Naive thymus-derived CD4-positive, alpha-beta T cell (primary cell): ENCODE measurements at regions of chr5 and their contacts with region 1.

Region 1: GRCh38 chr5:134370871-134371833 is at the start of gene UBE2B:
- DNase-seq: peak; percentile 96 to 99 (median 98)
- ATAC-seq: peak; percentile 86
- H3K4me3 ChIP-seq: peak within 1 kb of the TSS; percentile 94
- H3K4me3 Mint-ChIP-seq: peak within 1 kb of the TSS; percentile 82 to 99 (median 96)
- H3K27ac ChIP-seq: peak within 1 kb of the TSS; percentile 100
- H3K27ac Mint-ChIP-seq: peak within 1 kb of the TSS; percentile 97 to 100 (median 100)
- H3K4me1 ChIP-seq: peaks cover 25 to 38% of the 10 kb centered on the region in 2 donors
- H3K4me1 Mint-ChIP-seq: peaks cover 30 to 76% (median 60%) of the 10 kb centered on the region in 7 donors
- H3K27me3 ChIP-seq: no peaks in the 10 kb centered on the region
- H3K27me3 Mint-ChIP-seq: peaks cover 0 to 8% (median 0%) of the 10 kb centered on the region in 5 donors
- total RNA-seq, gene UBE2B: 91.4 to 141 (median 124) TPM

Region 2: DNA sequence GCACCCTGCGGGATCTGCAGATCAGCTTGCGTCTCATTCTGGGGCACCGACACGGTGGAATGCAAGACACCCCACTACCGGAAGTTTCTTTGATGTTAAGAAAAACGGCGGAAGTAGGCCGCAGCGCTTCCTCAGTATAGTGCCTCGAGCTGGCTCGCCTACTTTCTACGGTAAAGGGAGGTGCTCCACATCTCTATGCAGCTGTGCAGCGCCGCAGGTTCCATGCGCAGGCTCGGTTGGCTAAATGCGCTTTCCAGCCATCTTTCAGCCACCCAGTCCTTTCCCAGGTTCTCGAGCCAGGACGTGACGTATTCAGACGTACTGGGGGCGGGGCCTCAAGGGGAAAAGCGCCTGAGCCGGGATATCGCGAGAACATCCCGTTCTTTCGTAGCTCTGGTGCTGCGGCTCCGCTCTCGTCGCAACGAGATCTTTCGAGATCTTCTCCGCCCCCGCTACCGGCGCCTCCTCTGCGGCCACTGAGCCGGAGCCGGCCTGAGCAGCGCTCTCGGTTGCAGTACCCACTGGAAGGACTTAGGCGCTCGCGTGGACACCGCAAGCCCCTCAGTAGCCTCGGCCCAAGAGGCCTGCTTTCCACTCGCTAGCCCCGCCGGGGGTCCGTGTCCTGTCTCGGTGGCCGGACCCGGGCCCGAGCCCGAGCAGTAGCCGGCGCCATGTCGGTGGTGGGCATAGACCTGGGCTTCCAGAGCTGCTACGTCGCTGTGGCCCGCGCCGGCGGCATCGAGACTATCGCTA is 1319.4 kb before region 1 on chr5 and contains the start of gene HSPA4:
- CTCF ChIA-PET with region 1: no interaction called
- POLR2A ChIA-PET with region 1: interaction called, 3 read pairs
- intact Hi-C with region 1: loop called in 1 of 2 experiments (anchors 2 kb)
- DNase-seq: peak; percentile 86 to 99 (median 98)
- ATAC-seq: peak; percentile 91
- H3K4me3 ChIP-seq: peak within 1 kb of the TSS; percentile 92
- H3K4me3 Mint-ChIP-seq: peak within 1 kb of the TSS; percentile 91 to 99 (median 98)
- H3K27ac ChIP-seq: peak within 1 kb of the TSS; percentile 98
- H3K27ac Mint-ChIP-seq: peak within 1 kb of the TSS; percentile 99 to 100 (median 100)
- H3K4me1 ChIP-seq: peaks cover 17 to 19% of the 10 kb centered on the region in 2 donors
- H3K4me1 Mint-ChIP-seq: peaks cover 31 to 70% (median 52%) of the 10 kb centered on the region in 7 donors
- H3K27me3 ChIP-seq: no peaks in the 10 kb centered on the region
- H3K27me3 Mint-ChIP-seq: no peaks in the 10 kb centered on the region
- total RNA-seq, gene HSPA4: 42.1 to 103 (median 50.0) TPM

Region 3: DNA sequence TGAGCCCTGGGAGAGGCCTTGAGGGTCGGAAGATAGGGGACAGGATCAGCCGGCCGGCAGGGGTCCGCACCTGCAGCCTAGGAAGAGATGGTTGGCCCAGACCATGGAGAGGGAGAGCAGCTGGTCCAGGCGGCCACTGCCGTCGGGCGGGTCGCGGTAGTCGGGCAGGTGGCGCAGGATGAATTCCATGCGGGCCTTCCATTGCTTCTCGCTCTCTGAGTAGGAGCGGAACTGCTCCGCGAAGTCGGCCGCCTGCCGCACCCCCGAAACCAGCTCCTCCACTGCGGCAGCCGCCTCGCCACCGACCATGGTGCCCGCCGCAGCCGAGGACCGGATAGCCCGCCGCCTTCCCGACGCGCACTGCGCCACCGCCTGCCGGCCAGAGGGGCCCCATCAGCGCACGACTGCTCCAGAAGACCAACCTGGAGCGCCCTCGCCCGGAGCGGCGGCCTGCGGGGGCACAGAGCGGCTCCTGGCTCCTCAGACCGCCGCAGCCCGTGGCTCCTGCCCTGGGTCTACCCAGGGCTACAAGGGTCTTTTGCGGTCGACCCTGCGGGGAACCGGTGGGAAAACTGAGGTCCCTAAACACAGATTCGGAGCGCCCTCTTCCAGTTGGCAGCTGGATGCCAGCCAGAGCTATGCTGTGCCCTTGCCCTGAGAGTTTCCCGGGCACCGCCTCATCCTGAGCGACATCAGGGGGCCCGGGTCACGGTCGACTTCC is 40.6 kb after region 1 on chr5 and contains the start of gene CDKN2AIPNL:
- CTCF ChIA-PET with region 1: interaction called, 4 read pairs
- POLR2A ChIA-PET with region 1: interaction called, 57 read pairs
- intact Hi-C with region 1: loop called (anchors 1 to 2 kb)
- DNase-seq: peak; percentile 83 to 93 (median 89)
- ATAC-seq: peak; percentile 100
- H3K4me3 ChIP-seq: peak within 1 kb of the TSS; percentile 82
- H3K4me3 Mint-ChIP-seq: peak within 1 kb of the TSS; percentile 86 to 96 (median 92)
- H3K27ac ChIP-seq: peak within 1 kb of the TSS; percentile 82
- H3K27ac Mint-ChIP-seq: peak within 1 kb of the TSS; percentile 63 to 93 (median 90)
- H3K4me1 ChIP-seq: peaks cover 16 to 23% of the 10 kb centered on the region in 2 donors
- H3K4me1 Mint-ChIP-seq: peaks cover 20 to 54% (median 38%) of the 10 kb centered on the region in 7 donors
- H3K27me3 ChIP-seq: no peaks in the 10 kb centered on the region
- H3K27me3 Mint-ChIP-seq: no peaks in the 10 kb centered on the region
- total RNA-seq, gene CDKN2AIPNL: 11.5 to 20.8 (median 16.8) TPM

Region 4: DNA sequence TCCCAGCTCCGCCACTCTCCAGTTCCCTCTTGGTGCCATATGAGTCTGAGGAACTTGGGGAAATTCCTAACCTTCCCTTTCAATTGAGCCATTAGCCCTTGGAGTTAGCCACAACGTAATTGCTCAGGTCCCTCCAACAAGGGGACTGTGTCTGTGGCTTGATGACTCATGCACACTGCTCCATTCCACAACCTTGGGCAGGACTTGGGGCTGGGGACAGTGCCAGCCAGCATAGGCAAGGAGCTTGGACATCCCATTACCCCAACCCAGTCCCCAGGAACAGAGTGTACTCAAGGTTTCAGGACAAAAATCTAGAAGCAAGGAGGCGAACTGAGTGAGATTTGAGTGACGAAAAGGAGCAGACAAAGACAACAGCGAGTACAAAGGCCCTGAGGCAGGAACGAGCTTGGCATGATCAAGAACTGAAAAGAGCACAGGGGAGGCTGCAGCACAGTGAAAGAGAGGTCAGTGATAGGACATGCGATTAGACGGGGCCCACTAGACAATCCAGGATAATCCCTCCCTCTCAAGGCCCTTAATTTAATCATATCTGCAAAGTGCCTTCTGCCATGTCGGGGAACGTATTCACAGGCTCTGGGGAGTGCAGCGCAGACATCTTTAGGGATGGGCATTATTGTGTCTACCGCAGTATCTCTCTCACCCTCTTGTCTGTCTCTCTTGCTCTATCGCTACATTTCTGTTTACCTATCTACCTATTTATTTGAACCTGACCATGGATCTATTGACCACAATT is 138.4 kb after region 1 on chr5:
- CTCF ChIA-PET with region 1: no interaction called
- POLR2A ChIA-PET with region 1: no interaction called
- intact Hi-C with region 1: no loop called
- DNase-seq: no peak
- ATAC-seq: no peak
- H3K4me3 ChIP-seq: no peak overlapping the region
- H3K4me3 Mint-ChIP-seq: no peak overlapping the region
- H3K27ac ChIP-seq: no peak overlapping the region
- H3K27ac Mint-ChIP-seq: peak overlapping the region in 1 of 9 donors; percentile 19
- H3K4me1 ChIP-seq: peaks cover under 1 to 4% of the 10 kb centered on the region in 2 donors
- H3K4me1 Mint-ChIP-seq: peaks cover 0 to 31% (median 7%) of the 10 kb centered on the region in 7 donors
- H3K27me3 ChIP-seq: no peaks in the 10 kb centered on the region
- H3K27me3 Mint-ChIP-seq: no peaks in the 10 kb centered on the region

Region 5: DNA sequence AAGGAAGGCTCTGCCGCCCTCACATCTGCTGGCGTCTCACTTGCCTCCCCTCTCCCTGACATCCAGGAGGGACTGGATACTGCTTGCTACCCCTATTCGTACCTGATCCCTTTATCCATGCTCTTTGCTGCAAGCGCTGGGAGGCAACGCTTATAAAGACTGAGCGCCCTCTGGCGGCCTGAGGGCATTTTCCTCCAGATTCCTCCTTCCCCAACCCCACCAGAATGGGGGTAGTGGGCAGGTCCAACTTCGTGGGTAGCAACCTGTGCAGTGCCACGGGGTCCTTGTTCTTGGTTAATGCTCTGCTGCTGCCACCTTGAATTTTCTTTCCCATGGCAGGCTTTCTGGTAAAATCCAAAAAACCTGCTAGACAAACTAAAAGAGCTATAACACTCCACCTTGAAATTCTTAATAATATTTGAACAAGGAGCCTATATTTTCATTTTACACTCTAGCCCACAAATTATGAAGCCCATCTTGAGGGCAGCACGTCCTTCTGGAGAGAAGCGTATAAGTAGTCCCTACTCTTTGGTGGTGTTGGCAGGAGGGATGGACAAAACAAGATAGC is 206.7 kb after region 1 on chr5:
- CTCF ChIA-PET with region 1: interaction called, 9 read pairs
- POLR2A ChIA-PET with region 1: interaction called, 5 read pairs
- intact Hi-C with region 1: loop called in 1 of 2 experiments (anchors 1 kb)
- DNase-seq: peak; percentile 56 to 77 (median 69)
- ATAC-seq: peak; percentile 80
- H3K4me3 ChIP-seq: no peak overlapping the region
- H3K4me3 Mint-ChIP-seq: no peak overlapping the region
- H3K27ac ChIP-seq: peak overlapping the region; percentile 44
- H3K27ac Mint-ChIP-seq: peak overlapping the region in 8 of 9 donors; percentile 2 to 78 (median 63)
- H3K4me1 ChIP-seq: no peaks in the 10 kb centered on the region
- H3K4me1 Mint-ChIP-seq: peaks cover 0 to 25% (median 13%) of the 10 kb centered on the region in 7 donors
- H3K27me3 ChIP-seq: no peaks in the 10 kb centered on the region
- H3K27me3 Mint-ChIP-seq: no peaks in the 10 kb centered on the region

Region 6: DNA sequence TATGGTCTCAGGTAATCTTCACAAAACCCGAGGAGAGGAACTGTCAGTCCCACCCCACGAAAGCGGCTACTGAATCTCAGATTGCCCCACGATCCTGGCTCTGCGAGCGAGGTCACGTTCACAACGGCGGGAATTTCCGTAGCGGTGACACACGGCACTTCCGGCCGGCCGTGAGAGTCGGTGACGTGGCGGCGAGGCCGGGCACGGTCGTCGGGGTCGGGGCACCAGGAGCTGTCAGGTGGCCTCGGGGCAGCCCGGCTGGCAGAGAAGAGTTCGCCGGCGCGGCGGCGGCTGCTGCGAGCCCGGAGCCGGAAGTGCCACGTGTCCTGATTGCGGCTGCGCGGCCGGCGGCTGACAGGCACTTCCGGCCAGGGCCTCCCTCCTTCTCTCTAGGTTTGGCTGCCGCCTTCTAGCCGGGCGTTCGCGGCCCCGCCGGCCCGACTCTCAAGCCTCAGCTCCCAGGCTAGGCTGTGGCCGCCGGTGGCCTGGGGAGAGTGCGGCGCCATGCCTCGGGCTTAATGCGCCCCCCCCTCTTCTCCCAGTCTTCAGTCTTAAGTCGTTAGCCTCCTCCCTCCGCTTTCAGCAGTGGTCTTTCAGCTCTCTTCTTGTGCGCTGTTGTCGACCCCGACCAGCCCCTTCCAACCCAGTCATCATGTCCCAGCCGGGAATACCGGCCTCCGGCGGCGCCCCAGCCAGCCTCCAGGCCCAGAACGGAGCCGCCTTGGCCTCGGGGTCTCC is 277.4 kb after region 1 on chr5 and contains the start of gene SEC24A:
- CTCF ChIA-PET with region 1: no interaction called
- POLR2A ChIA-PET with region 1: interaction called, 7 read pairs
- intact Hi-C with region 1: loop called (anchors 1 to 2 kb)
- DNase-seq: peak; percentile 83 to 93 (median 86)
- ATAC-seq: peak; percentile 92
- H3K4me3 ChIP-seq: peak within 1 kb of the TSS; percentile 76
- H3K4me3 Mint-ChIP-seq: peak within 1 kb of the TSS; percentile 89 to 100 (median 98)
- H3K27ac ChIP-seq: peak within 1 kb of the TSS; percentile 91
- H3K27ac Mint-ChIP-seq: peak within 1 kb of the TSS; percentile 94 to 100 (median 99)
- H3K4me1 ChIP-seq: peaks cover 7 to 9% of the 10 kb centered on the region in 2 donors
- H3K4me1 Mint-ChIP-seq: peaks cover 13 to 40% (median 26%) of the 10 kb centered on the region in 7 donors
- H3K27me3 ChIP-seq: no peaks in the 10 kb centered on the region
- H3K27me3 Mint-ChIP-seq: no peaks in the 10 kb centered on the region
- total RNA-seq, gene SEC24A: 13.6 to 30.9 (median 16.0) TPM

Region 7: GRCh38 chr5:134873987-134874830 is 503.1 kb after region 1 on chr5 and contains the start of gene TXNDC15:
- CTCF ChIA-PET with region 1: no interaction called
- POLR2A ChIA-PET with region 1: no interaction called
- intact Hi-C with region 1: loop called in 1 of 2 experiments (anchors 10 kb)
- DNase-seq: peak; percentile 69 to 86 (median 78)
- ATAC-seq: peak; percentile 98
- H3K4me3 ChIP-seq: peak within 1 kb of the TSS; percentile 95
- H3K4me3 Mint-ChIP-seq: peak within 1 kb of the TSS; percentile 89 to 98 (median 94)
- H3K27ac ChIP-seq: peak within 1 kb of the TSS; percentile 88
- H3K27ac Mint-ChIP-seq: peak within 1 kb of the TSS; percentile 91 to 97 (median 95)
- H3K4me1 ChIP-seq: peaks cover 16 to 32% of the 10 kb centered on the region in 2 donors
- H3K4me1 Mint-ChIP-seq: peaks cover 31 to 51% (median 45%) of the 10 kb centered on the region in 7 donors
- H3K27me3 ChIP-seq: no peaks in the 10 kb centered on the region
- H3K27me3 Mint-ChIP-seq: no peaks in the 10 kb centered on the region
- total RNA-seq, gene TXNDC15: 24.2 to 71.3 (median 36.8) TPM